Activated CD4-positive, alpha-beta memory T cell treated with anti-CD3 and anti-CD28 coated beads for 36 hours (primary cell): ENCODE measurements at regions of chr11 and their contacts with region 1.

Region 1: GRCh38 chr11:72430741-72431570 is 3.4 kb downstream of the CLPB start:
- DNase-seq: peak; percentile 51
- H3K4me3 Mint-ChIP-seq: no peak overlapping the region
- H3K27ac Mint-ChIP-seq: no peak overlapping the region
- H3K4me1 Mint-ChIP-seq: peaks cover 30% of the 10 kb centered on the region
- H3K27me3 Mint-ChIP-seq: no peaks in the 10 kb centered on the region

Region 2: GRCh38 chr11:71928737-71929452 is 502.1 kb before region 1 on chr11 and contains the start of gene RNF121:
- CTCF ChIA-PET with region 1: interaction called, 3 read pairs
- POLR2A ChIA-PET with region 1: interaction called, 4 read pairs
- intact Hi-C with region 1: loop called (anchors 1 kb)
- DNase-seq: peak; percentile 99
- H3K4me3 Mint-ChIP-seq: peak within 1 kb of the TSS; percentile 86
- H3K27ac Mint-ChIP-seq: peak within 1 kb of the TSS; percentile 97
- H3K4me1 Mint-ChIP-seq: peaks cover 44% of the 10 kb centered on the region
- H3K27me3 Mint-ChIP-seq: no peaks in the 10 kb centered on the region
- total RNA-seq, gene RNF121: 34.9 to 37.1 TPM

Region 3: DNA sequence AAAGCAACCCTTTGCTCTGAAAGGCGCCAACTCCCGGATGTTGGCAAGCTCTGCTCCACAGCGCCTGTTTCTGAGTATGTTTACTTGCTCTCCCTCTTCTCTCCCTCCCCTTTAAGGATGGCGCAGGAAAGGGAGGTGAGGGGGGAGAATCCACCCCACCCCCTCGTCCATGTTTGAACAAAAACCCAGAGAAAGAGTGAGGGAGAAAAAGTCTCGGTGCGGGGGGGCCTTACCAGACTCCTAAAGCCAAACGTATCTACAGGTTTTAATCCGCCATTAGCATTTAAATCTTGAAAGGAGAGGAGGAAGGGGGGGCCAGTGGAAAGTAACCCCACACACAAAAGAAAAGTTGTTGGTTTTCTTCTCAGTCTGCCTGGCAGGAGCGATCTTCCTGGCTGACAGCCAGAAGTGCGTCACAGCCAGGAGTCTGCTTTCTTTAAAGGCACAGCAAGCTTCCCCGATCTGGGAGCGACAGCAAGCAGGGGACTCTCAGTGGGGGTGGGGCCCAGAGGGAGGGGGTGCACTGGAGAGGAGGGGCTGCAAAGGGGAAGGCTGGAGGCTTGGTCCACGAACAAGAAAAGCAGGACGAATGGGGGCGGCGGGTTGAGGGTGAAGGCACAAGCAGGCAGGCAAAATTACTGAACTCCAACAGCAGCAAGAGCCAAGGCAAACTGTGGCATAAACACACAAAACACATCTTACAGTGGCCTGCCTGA is 390.1 kb before region 1 on chr11:
- CTCF ChIA-PET with region 1: interaction called, 8 read pairs
- POLR2A ChIA-PET with region 1: no interaction called
- intact Hi-C with region 1: loop called (anchors 5 kb)
- DNase-seq: peak; percentile 83
- H3K4me3 Mint-ChIP-seq: no peak overlapping the region
- H3K27ac Mint-ChIP-seq: no peak overlapping the region
- H3K4me1 Mint-ChIP-seq: peaks cover 34% of the 10 kb centered on the region
- H3K27me3 Mint-ChIP-seq: no peaks in the 10 kb centered on the region

Region 4: GRCh38 chr11:72238040-72238450 is 192.9 kb before region 1 on chr11:
- CTCF ChIA-PET with region 1: interaction called, 21 read pairs
- POLR2A ChIA-PET with region 1: no interaction called
- intact Hi-C with region 1: no loop called
- DNase-seq: peak; percentile 72
- H3K4me3 Mint-ChIP-seq: no peak overlapping the region
- H3K27ac Mint-ChIP-seq: no peak overlapping the region
- H3K4me1 Mint-ChIP-seq: peaks cover 12% of the 10 kb centered on the region
- H3K27me3 Mint-ChIP-seq: peaks cover 33% of the 10 kb centered on the region

Region 5: GRCh38 chr11:72328366-72329224 is 102.4 kb before region 1 on chr11:
- CTCF ChIA-PET with region 1: interaction called, 20 read pairs
- POLR2A ChIA-PET with region 1: no interaction called
- intact Hi-C with region 1: loop called (anchors 5 kb)
- DNase-seq: no peak
- H3K4me3 Mint-ChIP-seq: no peak overlapping the region
- H3K27ac Mint-ChIP-seq: no peak overlapping the region
- H3K4me1 Mint-ChIP-seq: peaks cover 19% of the 10 kb centered on the region
- H3K27me3 Mint-ChIP-seq: no peaks in the 10 kb centered on the region

Region 6: GRCh38 chr11:72363112-72363511 is 67.8 kb before region 1 on chr11:
- CTCF ChIA-PET with region 1: no interaction called
- POLR2A ChIA-PET with region 1: no interaction called
- intact Hi-C with region 1: no loop called
- DNase-seq: no peak
- H3K4me3 Mint-ChIP-seq: no peak overlapping the region
- H3K27ac Mint-ChIP-seq: no peak overlapping the region
- H3K4me1 Mint-ChIP-seq: no peaks in the 10 kb centered on the region
- H3K27me3 Mint-ChIP-seq: no peaks in the 10 kb centered on the region

Region 7: DNA sequence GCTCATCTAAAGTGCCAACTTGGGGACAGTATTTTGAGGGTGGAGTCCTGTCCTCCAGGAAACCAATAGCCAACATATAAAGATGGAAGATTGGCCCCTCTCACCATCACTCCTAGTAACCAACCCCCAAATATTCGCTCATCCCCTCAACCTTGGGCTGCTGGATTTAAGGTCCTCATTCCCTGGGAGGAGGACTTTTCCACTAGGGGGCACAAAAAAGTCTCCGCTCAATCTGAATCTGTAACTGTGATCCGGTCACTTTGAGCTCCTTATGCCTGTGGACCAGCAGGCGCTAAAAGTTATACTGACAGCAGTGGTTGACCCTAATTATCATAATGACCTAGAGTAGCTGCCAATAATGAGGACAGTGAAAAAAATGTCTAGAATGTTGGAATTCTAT is 23.8 kb after region 1 on chr11:
- CTCF ChIA-PET with region 1: interaction called, 10 read pairs
- POLR2A ChIA-PET with region 1: no interaction called
- intact Hi-C with region 1: no loop called
- DNase-seq: no peak
- H3K4me3 Mint-ChIP-seq: no peak overlapping the region
- H3K27ac Mint-ChIP-seq: no peak overlapping the region
- H3K4me1 Mint-ChIP-seq: no peaks in the 10 kb centered on the region
- H3K27me3 Mint-ChIP-seq: peaks cover 4% of the 10 kb centered on the region

Region 8: GRCh38 chr11:72525466-72525865 is 94.5 kb after region 1 on chr11:
- CTCF ChIA-PET with region 1: no interaction called
- POLR2A ChIA-PET with region 1: no interaction called
- intact Hi-C with region 1: no loop called
- DNase-seq: no peak
- H3K4me3 Mint-ChIP-seq: no peak overlapping the region
- H3K27ac Mint-ChIP-seq: no peak overlapping the region
- H3K4me1 Mint-ChIP-seq: peaks cover 12% of the 10 kb centered on the region
- H3K27me3 Mint-ChIP-seq: no peaks in the 10 kb centered on the region